ENCODE measurements at regions of chr9 and their contacts with region 1.

Region 1: GRCh38 chr9:94726495-94727191 is at the start of gene AOPEP:
- DNase-seq: peak; percentile 100
- H3K4me3 Mint-ChIP-seq: peak within 1 kb of the TSS; percentile 94
- H3K27ac Mint-ChIP-seq: peak within 1 kb of the TSS; percentile 97
- H3K4me1 Mint-ChIP-seq: peaks cover 6% of the 10 kb centered on the region
- H3K27me3 Mint-ChIP-seq: no peaks in the 10 kb centered on the region
- total RNA-seq, gene AOPEP: 17.9 and 20.7 TPM in 2 replicates

Region 2: GRCh38 chr9:94259077-94259892 is 467.4 kb before region 1 on chr9 and contains the start of gene ZNF169:
- intact Hi-C with region 1: loop called (anchors 5 kb)
- DNase-seq: peak; percentile 96
- H3K4me3 Mint-ChIP-seq: peak within 1 kb of the TSS; percentile 99
- H3K27ac Mint-ChIP-seq: peak within 1 kb of the TSS; percentile 98
- H3K4me1 Mint-ChIP-seq: peaks cover 15% of the 10 kb centered on the region
- H3K27me3 Mint-ChIP-seq: peaks cover 14% of the 10 kb centered on the region
- total RNA-seq, gene ZNF169: 7.1 and 9.4 TPM in 2 replicates

Region 3: GRCh38 chr9:94802793-94803192 is 76.2 kb after region 1 on chr9:
- intact Hi-C with region 1: loop called (anchors 2 kb)
- DNase-seq: peak; percentile 63
- H3K4me3 Mint-ChIP-seq: no peak overlapping the region
- H3K27ac Mint-ChIP-seq: peak overlapping the region; percentile 45
- H3K4me1 Mint-ChIP-seq: peaks cover 28% of the 10 kb centered on the region
- H3K27me3 Mint-ChIP-seq: no peaks in the 10 kb centered on the region

Region 4: GRCh38 chr9:95127249-95128176 is 400.9 kb after region 1 on chr9:
- intact Hi-C with region 1: loop called (anchors 5 kb)
- DNase-seq: peak; percentile 92
- H3K4me3 Mint-ChIP-seq: no peak overlapping the region
- H3K27ac Mint-ChIP-seq: no peak overlapping the region
- H3K4me1 Mint-ChIP-seq: peaks cover 4% of the 10 kb centered on the region
- H3K27me3 Mint-ChIP-seq: no peaks in the 10 kb centered on the region

Measured in activated CD4-positive, alpha-beta T cell treated with anti-CD3 and anti-CD28 coated beads, Interleukin-2, amount 10 ng/mL, durations not matched to agents 24 days and 14 days (primary cell).